ENCODE measurements at regions of chr5 and their contacts with region 1.

Region 1: DNA sequence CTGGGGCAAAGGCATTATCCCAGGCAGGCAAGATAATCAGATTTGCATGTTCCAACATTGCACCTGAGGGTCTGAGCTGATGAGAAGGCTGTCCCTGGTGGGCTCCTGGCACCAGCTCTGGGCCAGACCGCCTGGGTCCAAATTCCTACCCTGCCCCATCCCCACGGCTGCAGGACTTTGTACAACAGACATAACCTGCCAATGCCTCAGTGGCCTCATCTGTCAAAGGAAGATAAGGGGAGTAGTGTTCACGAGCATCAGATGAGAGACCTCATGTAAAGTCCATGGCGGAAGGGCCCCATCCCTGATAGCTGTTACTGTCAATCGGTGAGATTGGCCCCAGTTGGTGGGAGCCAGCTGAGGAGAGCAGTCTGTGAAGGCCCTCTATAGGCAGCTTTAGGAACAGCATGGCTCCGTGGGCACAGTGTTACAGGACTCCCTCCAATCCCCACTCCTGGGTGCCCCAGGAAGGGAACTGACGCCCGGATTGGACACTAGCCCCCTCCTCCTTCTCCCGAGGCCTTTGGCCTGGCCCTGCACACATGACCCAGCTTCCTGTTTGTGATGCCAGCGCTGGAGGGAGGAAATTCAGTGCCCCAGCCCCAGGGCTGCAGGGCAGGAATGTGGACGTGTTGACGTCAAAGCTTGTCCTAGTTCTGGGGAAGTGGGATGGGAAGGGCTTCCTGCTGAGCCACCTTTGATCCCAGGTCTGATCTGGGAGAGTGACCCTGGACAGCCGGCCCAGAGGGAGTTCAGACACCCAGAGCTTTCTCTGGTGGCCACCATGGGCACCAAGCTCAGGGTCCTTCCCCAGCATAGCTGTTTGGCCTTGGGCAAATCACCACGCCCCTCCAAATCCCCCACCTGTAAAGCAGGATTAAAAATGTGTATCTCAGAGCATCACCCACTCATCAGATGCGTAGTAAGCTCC is 56.2 kb downstream of the DUSP1 start:
- DNase-seq: no peak
- H3K4me3 ChIP-seq: no peak overlapping the region
- CTCF ChIP-seq: peak; percentile 90

Region 2: DNA sequence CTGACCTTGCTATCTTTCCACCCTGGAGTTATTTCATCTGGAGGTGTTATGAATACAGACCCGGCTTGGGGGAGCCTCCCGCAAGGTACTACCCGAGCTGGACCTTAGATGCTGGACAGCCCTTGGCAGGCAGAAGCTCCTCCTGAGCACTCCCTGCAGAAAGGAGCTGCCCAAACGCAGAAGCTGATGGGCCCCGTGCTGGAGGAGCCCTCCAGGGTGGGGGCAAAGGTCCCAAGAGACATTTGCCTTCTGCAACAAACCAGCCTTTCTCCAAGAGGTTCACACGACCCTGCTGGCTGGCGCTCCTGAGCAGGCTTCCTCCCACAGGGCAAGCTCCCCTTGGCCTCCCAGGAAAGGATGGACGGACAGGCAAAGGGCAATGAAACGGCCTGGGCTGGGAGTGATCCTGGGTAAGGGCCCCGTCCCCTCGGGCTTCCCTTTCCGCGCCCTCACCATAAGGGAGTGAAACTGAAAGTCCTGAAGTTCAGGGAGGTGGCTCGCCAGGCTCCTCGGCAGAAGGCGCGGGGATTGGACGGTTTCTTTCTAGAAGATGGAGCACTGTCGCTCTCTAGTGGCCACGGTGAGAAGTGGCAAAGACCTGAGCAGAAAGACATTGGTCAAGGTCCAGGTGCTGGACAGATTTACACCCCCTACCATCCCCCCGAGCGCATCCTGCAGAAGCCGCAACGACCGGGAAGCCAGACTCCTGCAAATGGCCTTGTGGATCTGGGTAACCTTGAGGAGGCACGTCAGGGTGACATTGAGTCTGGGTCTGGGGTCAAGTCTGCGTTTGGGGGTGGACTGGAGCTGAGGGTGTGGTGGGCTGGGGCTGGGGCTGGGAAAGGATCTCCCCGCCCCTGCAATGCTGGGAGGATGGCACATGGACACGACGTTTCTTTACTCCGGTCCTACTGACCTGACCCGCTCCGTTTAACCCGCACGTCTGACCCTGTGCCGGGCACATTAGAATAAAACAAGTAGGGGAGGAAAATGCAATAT is 17.3 kb before region 1 on chr5:
- CTCF ChIA-PET with region 1: interaction called, 61 read pairs
- POLR2A ChIA-PET with region 1: no interaction called
- DNase-seq: no peak
- H3K4me3 ChIP-seq: peak overlapping the region; percentile 68
- CTCF ChIP-seq: peak; percentile 82

Region 3: GRCh38 chr5:172748341-172748843 is 33.6 kb after region 1 on chr5:
- CTCF ChIA-PET with region 1: interaction called, 12 read pairs
- POLR2A ChIA-PET with region 1: no interaction called
- DNase-seq: no peak
- H3K4me3 ChIP-seq: no peak overlapping the region
- CTCF ChIP-seq: no peak

Region 4: DNA sequence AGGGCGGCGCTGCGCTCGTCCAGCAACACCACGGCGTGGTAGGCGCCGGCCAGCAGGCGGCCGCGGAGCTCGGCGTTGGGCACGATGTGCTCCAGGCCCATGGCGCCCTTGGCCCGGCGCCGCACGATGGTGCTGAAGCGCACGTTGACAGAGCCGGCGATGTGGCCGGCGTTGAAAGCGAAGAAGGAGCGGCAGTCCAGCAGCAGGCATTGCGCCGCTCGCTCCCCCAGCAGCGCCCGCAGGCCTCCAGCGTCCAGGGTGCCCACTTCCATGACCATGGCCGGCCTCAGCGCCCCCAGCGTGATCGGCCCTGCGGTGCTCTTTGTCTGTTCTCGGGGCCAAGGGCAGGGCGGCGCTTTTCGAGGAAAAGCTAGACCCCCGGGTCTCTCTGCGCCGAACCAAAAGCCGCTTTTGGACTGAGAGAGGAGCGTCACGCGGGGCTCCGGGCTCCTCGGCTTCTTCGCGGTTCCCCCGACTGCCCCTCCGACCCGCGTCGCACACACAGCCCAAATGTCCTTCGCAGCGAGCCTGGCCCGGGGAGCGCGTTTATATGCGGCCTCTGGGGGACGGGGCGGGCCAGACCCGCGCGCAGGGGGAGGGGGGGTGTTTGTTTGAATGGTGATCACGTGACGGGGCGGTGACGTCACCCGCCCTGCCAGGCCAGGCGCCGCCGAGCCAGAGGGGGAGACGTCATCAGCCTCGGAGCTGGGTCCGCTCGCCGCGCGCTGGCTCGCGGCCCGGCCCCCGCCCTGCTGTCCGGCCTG is 56.1 kb after region 1 on chr5 and contains the start of gene DUSP1:
- CTCF ChIA-PET with region 1: interaction called, 46 read pairs
- POLR2A ChIA-PET with region 1: interaction called, 20 read pairs
- DNase-seq: peak; percentile 79
- H3K4me3 ChIP-seq: peak within 1 kb of the TSS; percentile 82
- CTCF ChIP-seq: peak; percentile 69

Region 5: GRCh38 chr5:172897481-172898217 is 182.9 kb after region 1 on chr5:
- CTCF ChIA-PET with region 1: interaction called, 61 read pairs
- POLR2A ChIA-PET with region 1: no interaction called
- DNase-seq: peak; percentile 96
- H3K4me3 ChIP-seq: no peak overlapping the region
- CTCF ChIP-seq: no peak

Region 6: GRCh38 chr5:172932313-172933017 is 217.7 kb after region 1 on chr5:
- CTCF ChIA-PET with region 1: interaction called, 595 read pairs
- POLR2A ChIA-PET with region 1: interaction called, 6 read pairs
- DNase-seq: no peak
- H3K4me3 ChIP-seq: no peak overlapping the region
- CTCF ChIP-seq: peak; percentile 95

Region 7: GRCh38 chr5:172973127-172973916 is 258.6 kb after region 1 on chr5:
- CTCF ChIA-PET with region 1: interaction called, 33 read pairs
- POLR2A ChIA-PET with region 1: no interaction called
- DNase-seq: no peak
- H3K4me3 ChIP-seq: no peak overlapping the region
- CTCF ChIP-seq: no peak

Measured in AG04449 (cell line).